ENCODE measurements at regions of chr2 and their contacts with region 1.

Region 1: GRCh38 chr2:68909793-68910674 is 38.8 kb upstream of the BMP10 start:
- DNase-seq: peak; percentile 70
- CTCF ChIP-seq: peak; percentile 90

Region 2: DNA sequence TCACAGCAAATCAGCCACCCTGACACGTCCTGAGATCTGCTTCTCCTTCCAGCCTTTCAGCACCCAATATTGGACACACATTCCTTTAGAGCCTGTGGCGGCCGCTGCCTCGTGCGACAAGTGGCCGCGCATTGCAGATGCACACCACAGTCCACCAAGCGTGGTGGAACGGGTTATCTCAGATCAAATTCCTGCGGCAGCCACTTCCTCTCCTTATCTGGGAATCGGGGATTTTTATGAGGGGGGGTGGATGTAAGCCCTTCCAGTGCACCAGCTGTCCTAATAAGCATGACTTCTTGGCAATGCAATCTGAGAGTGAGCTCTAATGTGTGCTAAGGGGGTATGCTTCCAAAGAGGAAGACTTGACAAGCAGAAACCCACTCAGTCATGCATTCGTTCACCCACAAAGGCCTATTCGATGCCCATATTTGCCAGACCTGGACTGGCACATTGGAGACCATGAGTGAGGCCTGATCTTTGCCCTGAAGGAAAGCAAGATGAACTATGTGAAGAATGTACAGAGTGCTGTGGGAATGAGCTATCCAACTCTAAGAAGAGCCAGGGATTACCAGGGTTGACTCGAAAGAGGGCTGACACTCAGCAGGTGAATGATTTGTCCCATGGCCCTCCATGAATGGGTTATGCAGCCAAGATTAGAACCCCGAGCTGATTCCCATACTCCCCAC is 20.4 kb before region 1 on chr2:
- CTCF ChIA-PET with region 1: interaction called, 12 read pairs
- POLR2A ChIA-PET with region 1: no interaction called
- DNase-seq: no peak
- CTCF ChIP-seq: no peak

Region 3: DNA sequence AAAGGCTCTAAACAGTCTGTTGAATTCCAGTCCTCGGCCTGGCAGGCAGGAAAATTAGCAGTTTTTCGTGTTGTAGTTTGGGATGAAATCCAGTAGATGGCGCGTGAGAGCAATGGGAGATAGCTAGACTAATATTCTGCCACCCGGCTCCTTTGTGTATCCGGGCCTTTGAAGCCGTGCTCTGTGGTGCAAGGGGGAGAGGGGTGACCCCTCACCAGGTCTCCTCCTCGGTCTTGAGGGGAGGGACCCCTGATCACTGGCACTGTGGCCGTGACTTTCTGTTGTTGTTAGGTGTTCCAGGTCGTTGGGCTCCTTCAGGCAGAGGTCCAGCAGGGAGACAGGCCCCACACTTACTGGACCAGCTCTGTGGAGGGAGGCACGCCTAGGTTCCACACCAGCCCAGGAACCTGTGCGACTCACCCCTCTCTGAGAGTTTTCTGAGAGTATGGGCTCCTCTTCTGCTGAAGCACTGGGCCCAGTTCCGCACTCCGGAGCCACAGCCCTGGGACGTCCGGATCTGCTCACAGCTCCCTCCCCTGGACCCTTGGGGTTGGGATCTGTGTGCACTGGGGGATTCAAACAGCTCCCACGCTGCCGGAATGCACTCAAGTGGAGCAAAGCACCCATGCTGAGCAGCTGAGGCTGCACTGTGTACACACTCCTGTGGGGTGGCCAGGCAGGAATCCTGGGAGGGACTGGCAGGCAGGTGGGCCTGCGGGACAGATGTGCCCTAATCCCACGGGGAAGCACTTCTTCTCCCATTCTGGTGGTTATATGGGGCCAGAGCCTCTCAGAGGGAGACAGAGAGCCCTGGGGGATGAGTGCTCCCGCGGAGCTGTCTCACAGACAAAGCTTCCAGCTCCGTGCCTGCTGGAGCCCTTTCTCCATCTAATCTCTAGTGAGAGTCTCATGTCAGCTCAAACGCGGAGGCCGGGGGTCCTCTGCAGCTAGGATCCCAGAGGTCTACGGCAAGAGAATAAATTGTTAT is 33.8 kb after region 1 on chr2:
- CTCF ChIA-PET with region 1: interaction called, 13 read pairs
- POLR2A ChIA-PET with region 1: no interaction called
- DNase-seq: peak; percentile 55
- CTCF ChIP-seq: peak; percentile 62

Region 4: DNA sequence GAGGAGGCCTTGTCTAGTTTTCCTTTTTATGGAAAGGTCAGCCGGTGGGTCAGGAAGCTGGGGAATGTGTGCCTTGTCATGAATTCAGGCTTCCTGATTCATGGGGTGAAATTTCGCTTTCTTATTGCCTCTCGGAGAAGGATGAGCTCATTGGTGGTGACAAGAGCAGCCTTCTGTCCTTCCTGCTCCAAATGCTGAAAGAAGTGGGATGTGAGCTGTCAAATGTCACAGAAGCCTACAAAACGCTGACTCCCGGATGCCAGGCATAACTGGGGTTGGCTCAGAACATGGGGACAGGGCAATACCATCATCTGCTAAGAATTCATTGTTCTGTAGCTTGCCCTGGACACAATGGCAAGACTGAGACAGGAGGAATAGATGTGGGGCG is 1447.6 kb after region 1 on chr2:
- CTCF ChIA-PET with region 1: no interaction called
- POLR2A ChIA-PET with region 1: no interaction called
- DNase-seq: no peak
- CTCF ChIP-seq: no peak